ENCODE measurements at regions of chr15 and their contacts with region 1.

Region 1: DNA sequence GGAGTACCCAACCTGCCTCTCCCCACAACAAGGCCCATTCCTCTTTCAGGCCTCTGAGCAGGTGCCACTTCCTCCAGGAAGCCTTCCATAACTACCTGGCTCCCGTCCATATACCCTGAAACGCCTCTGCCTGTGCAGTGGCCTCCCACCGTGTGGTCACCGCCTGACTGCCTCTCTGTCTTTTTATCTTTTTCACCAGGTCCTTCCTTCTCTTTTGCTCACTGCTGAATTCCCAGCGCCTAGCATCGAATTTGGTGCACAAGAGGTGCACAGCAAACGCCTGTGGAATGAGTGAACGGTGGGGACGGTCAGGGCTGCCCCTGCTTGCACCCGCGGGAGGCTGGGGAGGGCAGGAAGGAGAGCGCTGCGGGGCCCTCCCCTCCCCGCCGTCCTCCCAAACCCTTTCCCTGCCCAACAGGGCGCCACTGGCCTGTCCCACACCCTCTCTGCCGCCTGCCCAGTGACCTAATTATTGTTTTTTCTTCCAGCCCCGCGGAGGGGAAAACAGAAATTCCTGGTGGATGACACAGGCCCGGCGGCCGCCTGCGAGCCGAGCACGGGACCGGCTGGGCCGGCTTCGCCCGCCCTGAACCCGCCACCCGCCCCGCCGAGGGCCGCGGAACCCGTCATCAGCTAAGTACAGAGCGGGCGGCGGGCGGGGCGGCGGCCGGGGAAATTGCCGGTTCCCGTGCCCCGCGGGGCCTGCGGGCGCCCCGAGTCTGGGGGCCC is 140.1 kb downstream of the SMAD6 start:
- DNase-seq: peak; percentile 75
- H3K4me3 ChIP-seq: peak overlapping the region; percentile 45
- H3K27me3 ChIP-seq: no peaks in the 10 kb centered on the region
- CTCF ChIP-seq: no peak

Region 2: GRCh38 chr15:66581972-66582537 is 260.1 kb before region 1 on chr15:
- CTCF ChIA-PET with region 1: no interaction called
- POLR2A ChIA-PET with region 1: interaction called, 19 read pairs
- DNase-seq: no peak
- H3K4me3 ChIP-seq: no peak overlapping the region
- H3K27me3 ChIP-seq: peaks cover 7% of the 10 kb centered on the region
- CTCF ChIP-seq: no peak

Region 3: GRCh38 chr15:66774001-66774814 is 67.9 kb before region 1 on chr15:
- CTCF ChIA-PET with region 1: interaction called, 31 read pairs
- POLR2A ChIA-PET with region 1: interaction called, 14 read pairs
- DNase-seq: no peak
- H3K4me3 ChIP-seq: no peak overlapping the region
- H3K27me3 ChIP-seq: no peaks in the 10 kb centered on the region
- CTCF ChIP-seq: peak; percentile 95

Region 4: DNA sequence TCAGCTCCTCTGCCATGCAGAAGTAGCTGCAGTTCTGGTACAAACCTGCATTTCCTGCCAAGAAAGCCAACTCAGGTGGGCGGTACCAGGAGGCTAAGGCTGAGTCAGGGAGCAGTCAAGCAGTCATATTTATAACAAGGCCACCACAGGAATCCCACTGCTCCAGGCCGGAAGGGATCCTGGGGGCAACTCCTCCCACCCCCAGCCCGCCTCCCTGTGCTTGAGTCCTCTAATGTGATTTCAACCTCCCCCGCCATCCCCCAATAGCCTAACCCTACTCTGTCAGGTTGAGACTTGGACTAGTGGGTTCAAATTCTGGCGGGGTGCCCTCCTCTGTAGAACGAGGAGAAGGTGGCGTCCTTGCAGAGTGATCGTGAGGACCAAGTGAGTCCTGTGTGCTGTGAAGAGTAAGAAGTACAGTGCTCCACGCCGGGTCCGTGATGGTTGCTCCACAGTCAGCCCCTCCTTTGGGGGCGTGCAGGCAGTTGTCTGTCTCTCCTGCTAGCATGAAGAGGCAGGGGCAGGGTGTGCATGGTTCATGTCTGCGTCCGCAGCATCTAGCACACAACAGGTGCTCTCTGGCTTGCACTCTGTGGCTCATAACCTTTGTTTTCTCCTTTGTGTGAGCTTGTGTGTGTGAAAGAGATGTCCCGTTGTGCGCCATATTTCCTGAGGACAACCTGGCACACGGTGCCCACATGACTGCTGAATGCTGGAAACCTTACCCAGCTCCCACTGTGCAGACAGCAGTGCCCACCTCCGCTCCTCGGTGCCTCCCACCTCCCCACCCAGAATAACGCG is 61.7 kb before region 1 on chr15:
- CTCF ChIA-PET with region 1: interaction called, 31 read pairs
- POLR2A ChIA-PET with region 1: interaction called, 14 read pairs
- DNase-seq: no peak
- H3K4me3 ChIP-seq: no peak overlapping the region
- H3K27me3 ChIP-seq: no peaks in the 10 kb centered on the region
- CTCF ChIP-seq: no peak

Region 5: DNA sequence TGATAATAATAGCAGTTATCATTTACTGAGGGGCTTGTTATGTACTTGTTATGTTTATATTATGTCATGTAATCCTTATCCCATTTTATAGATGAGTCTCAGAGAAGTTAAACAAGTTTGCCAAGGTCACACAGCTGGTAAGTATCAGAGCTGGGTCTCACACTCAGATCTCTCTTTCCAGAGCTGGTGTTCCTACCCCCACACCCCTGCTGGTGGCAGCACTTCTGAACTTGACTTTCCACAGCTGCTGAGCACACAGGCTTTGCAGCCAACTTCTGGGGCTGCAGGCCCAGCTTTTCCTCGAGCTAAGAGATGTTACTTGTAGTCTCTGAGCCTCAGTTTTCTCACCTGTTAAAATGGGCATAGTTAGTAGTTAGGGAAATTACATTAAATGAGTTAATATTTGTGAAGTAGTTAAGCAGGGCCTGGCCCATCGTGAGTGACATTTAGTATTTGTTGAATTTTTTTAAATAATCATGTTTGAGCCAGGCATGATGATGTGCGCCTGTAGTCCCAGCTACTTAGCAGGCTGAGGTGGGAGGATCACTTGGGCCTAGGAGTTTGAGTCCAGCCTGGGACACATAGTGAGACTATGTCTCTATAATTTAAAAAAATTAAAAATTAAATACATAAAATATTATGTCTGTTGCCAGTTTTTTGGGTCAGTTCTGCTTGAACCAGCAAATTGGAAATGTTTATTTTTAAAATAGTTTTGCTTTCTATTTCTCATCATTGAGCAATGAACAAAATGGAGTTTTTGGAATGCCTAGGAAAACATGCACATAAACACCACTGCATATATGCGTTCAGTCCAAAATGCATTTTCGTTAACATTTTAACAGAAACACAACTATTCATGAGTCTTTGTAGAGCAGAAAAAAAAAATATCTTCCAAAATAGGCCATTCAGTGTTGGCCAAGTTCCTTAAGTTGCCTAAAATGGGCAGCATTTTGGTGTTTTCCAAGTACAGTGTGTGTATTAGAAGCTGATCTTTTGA is 52.8 kb before region 1 on chr15:
- CTCF ChIA-PET with region 1: interaction called, 15 read pairs
- POLR2A ChIA-PET with region 1: no interaction called
- DNase-seq: no peak
- H3K4me3 ChIP-seq: no peak overlapping the region
- H3K27me3 ChIP-seq: no peaks in the 10 kb centered on the region
- CTCF ChIP-seq: peak; percentile 68

Region 6: DNA sequence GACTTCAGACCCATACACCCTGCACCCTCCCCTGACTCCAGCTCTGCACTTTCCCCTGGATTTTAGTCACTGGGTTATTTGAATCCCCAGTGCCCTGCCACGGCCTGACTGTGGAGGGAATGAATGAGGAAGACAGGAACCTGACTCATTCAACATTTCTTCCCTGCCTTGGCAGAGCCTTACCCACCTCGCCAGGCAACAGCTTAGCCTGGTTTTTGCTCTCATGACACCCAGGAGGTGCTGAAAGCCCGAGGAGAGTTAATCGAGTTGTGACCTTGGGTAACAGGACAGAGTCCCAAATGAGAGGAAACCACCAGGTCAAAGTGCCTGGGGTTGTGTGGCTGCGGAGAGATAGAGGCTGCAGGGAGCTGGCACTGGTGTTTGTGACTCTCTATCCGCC is 11.8 kb before region 1 on chr15:
- CTCF ChIA-PET with region 1: interaction called, 4 read pairs
- POLR2A ChIA-PET with region 1: interaction called, 17 read pairs
- DNase-seq: no peak
- H3K4me3 ChIP-seq: no peak overlapping the region
- H3K27me3 ChIP-seq: no peaks in the 10 kb centered on the region
- CTCF ChIP-seq: no peak

Region 7: DNA sequence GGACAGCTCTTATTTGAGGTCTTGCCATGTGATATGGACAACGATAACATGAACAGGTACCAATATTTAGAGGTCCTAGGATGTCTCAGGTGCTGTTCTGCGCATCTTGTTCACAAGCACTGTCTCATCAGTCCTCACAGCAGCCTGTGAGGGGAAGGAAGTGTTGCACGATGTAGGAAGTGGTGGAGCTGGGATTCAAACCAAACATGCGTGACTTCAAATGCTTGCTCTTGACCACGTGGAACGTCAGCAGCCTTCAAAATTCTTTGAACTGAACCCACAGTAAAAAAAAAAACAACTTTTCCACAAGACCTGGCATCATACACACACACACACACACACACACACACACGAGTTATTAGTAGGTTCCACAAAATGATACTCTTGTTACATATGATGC is 69.9 kb after region 1 on chr15:
- CTCF ChIA-PET with region 1: no interaction called
- POLR2A ChIA-PET with region 1: no interaction called
- DNase-seq: no peak
- H3K4me3 ChIP-seq: no peak overlapping the region
- H3K27me3 ChIP-seq: peaks cover 1% of the 10 kb centered on the region; the same call in 1 of the 2 replicates
- CTCF ChIP-seq: no peak

Measured in BJ (cell line).